ENCODE measurements at regions of chr18 and their contacts with region 1.

Region 1: GRCh38 chr18:59459369-59460079 is 100.5 kb upstream of the LMAN1 start:
- DNase-seq: no peak
- ATAC-seq: no peak
- H3K4me3 Mint-ChIP-seq: no peak overlapping the region
- H3K27ac Mint-ChIP-seq: no peak overlapping the region
- H3K4me1 Mint-ChIP-seq: no peaks in the 10 kb centered on the region
- H3K27me3 Mint-ChIP-seq: peaks cover 8% of the 10 kb centered on the region
- CTCF ChIP-seq: peak; percentile 57

Region 2: DNA sequence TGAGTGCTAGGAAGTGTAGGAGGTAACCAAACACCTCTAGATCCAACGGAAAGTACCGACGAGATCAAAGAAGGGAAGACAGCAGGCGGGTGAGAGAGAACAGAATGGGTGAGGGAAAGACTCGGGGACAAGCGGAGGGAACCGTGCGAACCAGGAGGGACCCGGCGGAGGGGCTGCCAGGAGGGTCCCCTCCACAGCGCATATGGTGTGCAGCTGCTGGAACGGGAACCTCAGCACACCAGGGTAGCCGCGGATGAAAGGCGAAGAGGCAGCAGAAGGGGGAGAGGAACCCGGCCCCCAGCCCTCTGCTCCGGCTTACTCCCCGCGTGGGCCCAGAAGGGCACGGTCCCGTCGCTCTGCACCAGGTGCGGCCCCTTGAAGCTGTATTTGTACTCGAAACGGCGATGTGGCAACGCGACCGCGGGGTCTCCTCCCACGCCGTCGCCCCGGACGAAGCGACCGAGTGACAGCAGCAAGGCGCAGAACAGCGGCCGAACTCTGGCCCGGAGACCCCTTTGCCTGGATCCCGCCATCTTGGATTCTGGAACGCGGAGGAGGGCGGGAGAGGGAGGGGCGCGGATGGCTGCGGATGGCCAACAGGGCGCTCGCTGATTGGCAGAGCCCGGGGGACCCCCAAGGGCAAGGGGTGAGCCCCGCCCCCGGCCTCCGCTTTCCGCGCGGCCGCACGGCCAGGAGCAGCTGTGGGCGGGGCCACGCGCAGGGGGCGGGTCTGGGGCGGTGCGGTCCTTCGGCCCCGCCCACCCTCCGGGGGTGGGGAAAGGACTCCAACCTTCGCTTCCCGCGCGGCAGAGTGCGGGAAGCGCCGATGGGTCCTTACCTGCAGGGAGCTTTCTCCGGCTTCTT is 100.6 kb before region 1 on chr18 and contains the start of gene LMAN1:
- CTCF ChIA-PET with region 1: no interaction called
- POLR2A ChIA-PET with region 1: no interaction called
- intact Hi-C with region 1: no loop called
- DNase-seq: peak; percentile 96
- ATAC-seq: peak; percentile 95
- H3K4me3 Mint-ChIP-seq: peak within 1 kb of the TSS; percentile 87
- H3K27ac Mint-ChIP-seq: peak within 1 kb of the TSS; percentile 91
- H3K4me1 Mint-ChIP-seq: peaks cover 36% of the 10 kb centered on the region
- H3K27me3 Mint-ChIP-seq: no peaks in the 10 kb centered on the region
- CTCF ChIP-seq: no peak
- total RNA-seq, gene LMAN1: 126 to 140 TPM

Region 3: DNA sequence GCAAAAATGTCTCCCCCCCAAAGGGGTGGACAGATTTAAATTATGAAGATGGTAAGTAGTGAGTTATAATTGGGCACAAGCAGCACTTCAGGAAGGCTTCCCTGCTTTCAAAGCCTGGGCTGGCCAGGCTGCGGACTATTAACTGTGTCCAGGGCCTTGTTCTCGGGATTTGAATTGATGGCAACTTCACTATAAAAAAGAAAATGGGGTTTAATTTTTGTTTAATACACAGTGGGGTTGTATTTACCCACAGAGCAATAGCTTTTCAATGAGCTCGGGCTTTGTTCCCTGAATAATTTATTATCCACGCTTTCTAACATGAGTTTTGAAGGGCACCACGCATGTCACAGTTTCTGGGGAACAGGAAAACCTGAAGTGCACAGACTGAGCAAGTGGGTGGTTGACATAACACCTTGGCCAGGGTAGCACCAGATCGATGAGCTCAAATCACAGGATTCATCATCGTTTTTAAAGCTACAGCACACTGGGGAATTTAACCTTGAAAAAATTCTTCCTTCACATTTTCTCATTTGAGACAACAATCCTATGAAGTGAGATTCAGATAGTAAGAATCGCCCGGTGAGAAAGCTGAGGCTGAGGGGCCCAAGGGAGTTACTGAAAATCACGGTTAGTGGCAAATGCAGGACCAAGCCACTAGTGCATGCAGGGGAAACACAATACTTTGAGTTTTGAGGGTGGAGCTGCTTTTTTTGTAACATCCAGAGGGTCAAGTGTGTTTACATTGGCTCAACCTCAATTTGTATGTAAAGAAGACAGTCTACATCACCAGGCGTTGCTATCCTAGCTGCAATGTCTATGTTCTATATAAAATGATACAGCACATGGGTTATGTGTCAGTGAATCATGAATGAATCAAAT is 71.6 kb before region 1 on chr18:
- CTCF ChIA-PET with region 1: no interaction called
- POLR2A ChIA-PET with region 1: no interaction called
- intact Hi-C with region 1: no loop called
- DNase-seq: no peak
- ATAC-seq: no peak
- H3K4me3 Mint-ChIP-seq: no peak overlapping the region
- H3K27ac Mint-ChIP-seq: no peak overlapping the region
- H3K4me1 Mint-ChIP-seq: no peaks in the 10 kb centered on the region
- H3K27me3 Mint-ChIP-seq: peaks cover 13% of the 10 kb centered on the region
- CTCF ChIP-seq: no peak

Region 4: DNA sequence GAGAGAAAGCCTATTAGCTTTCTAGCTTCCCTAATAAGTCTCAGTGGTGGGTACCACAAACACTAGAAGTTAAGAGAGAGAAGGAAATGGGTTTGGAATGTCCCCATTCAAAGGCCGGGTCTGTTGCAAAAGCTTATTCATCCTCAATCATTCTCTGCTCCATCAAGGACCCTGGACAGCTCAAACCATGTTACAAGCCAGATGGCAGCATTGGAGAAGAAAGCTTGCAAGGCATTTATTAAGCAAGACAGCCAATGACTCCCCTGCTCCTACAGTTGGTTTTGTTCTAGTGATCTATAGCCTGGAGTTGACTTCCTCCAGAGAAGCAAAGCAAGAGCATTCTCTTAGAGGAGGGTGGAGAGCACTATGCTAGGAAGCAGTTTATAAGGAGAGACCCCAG is 13.5 kb before region 1 on chr18:
- CTCF ChIA-PET with region 1: interaction called, 32 read pairs
- POLR2A ChIA-PET with region 1: no interaction called
- intact Hi-C with region 1: no loop called
- DNase-seq: no peak
- ATAC-seq: no peak
- H3K4me3 Mint-ChIP-seq: no peak overlapping the region
- H3K27ac Mint-ChIP-seq: no peak overlapping the region
- H3K4me1 Mint-ChIP-seq: no peaks in the 10 kb centered on the region
- H3K27me3 Mint-ChIP-seq: peaks cover 4% of the 10 kb centered on the region
- CTCF ChIP-seq: no peak

Region 5: GRCh38 chr18:59470561-59471121 is 11.1 kb after region 1 on chr18:
- CTCF ChIA-PET with region 1: interaction called, 12 read pairs
- POLR2A ChIA-PET with region 1: no interaction called
- intact Hi-C with region 1: no loop called
- DNase-seq: no peak
- ATAC-seq: no peak
- H3K4me3 Mint-ChIP-seq: no peak overlapping the region
- H3K27ac Mint-ChIP-seq: no peak overlapping the region
- H3K4me1 Mint-ChIP-seq: no peaks in the 10 kb centered on the region
- H3K27me3 Mint-ChIP-seq: peaks cover 14% of the 10 kb centered on the region
- CTCF ChIP-seq: no peak

Measured in activated CD8-positive, alpha-beta T cell treated with anti-CD3 and anti-CD28 coated beads for 36 hours (primary cell).